Motor neuron (in vitro differentiated cells): ENCODE measurements at regions of chr3 and their contacts with region 1.

Region 1: GRCh38 chr3:67357610-67358458 is 296.6 kb downstream of the SUCLG2 start:
- ATAC-seq: peak in 7 of 8 experiments; percentile 25 to 91 (median 71)
- H3K4me3 ChIP-seq: no peak overlapping the region
- H3K27ac ChIP-seq: no peak overlapping the region
- H3K4me1 ChIP-seq: no peaks in the 10 kb centered on the region

Region 2: GRCh38 chr3:66938338-66938963 is 419.4 kb before region 1 on chr3:
- in situ Hi-C with region 1: loop called in 1 of 9 experiments (anchors 25 kb)
- ATAC-seq: peak; percentile 81 to 100 (median 97)
- H3K4me3 ChIP-seq: no peak overlapping the region
- H3K27ac ChIP-seq: no peak overlapping the region
- H3K4me1 ChIP-seq: peaks cover 13 to 18% of the 10 kb centered on the region in 2 donors

Region 3: DNA sequence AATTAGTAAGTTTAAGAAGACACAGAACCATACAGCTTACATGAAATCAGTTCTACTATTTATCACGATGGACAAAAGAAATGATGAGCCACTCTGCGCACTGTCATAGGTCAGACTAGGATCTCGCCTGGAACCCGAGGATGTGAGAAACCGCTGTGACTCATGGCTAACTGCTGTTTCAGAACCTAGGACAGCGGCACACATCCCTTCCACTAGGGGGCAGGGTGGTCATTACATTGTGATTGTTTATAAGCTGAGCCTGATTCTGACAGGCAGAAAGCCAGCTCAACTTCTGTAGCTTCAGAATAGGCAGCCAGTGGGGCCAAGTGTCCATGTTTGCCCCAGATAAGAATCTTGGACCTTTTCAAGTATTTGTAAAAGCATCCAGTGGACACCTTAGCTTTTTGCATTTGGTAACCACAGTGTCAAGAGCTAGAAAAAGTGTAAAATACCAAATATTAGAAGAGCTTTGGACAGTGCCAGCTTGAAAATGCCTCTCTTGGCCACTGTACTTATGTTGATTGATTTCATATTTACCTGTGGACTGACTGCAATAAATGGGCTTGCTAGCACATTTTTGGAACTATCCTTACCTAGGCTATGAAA is 243.9 kb before region 1 on chr3:
- in situ Hi-C with region 1: loop called in 2 of 9 experiments (anchors 10 to 25 kb)
- ATAC-seq: peak; percentile 93 to 100 (median 98)
- H3K4me3 ChIP-seq: no peak overlapping the region
- H3K27ac ChIP-seq: no peak overlapping the region
- H3K4me1 ChIP-seq: no peaks in the 10 kb centered on the region